Caco-2 (cell line): ENCODE measurements at regions of chr2 and their contacts with region 1.

Region 1: GRCh38 chr2:156892467-156893281 is 364.8 kb upstream of the GALNT5 start:
- DNase-seq: peak in 1 of 2 experiments; percentile 55
- H3K4me3 ChIP-seq: peak overlapping the region; percentile 36
- H3K4me3 Mint-ChIP-seq: peak overlapping the region; percentile 66
- H3K27ac Mint-ChIP-seq: no peak overlapping the region
- H3K4me1 ChIP-seq: no peaks in the 10 kb centered on the region
- H3K4me1 Mint-ChIP-seq: peaks cover 10% of the 10 kb centered on the region
- H3K27me3 ChIP-seq: no peaks in the 10 kb centered on the region
- H3K27me3 Mint-ChIP-seq: peaks cover 2% of the 10 kb centered on the region
- CTCF ChIP-seq: peak; percentile 58 to 71

Region 2: DNA sequence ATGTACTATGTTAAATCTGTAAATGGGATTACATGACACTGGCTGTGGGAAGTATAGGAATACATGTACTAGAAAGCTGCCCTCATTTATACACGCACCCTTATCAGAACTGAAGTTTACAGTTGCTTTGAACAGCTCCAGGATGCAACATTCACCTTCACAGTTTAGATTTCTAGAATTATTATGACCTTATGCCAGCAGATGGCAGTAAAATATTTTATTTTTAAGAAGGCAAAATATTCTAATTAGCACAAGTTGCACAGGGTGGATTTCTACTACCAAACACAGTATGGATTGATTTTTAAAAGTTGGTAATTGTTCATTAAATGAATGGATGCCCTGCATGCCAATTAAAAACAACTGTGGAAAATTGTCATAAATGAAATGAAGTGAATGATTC is 1523.7 kb before region 1 on chr2:
- CTCF ChIA-PET with region 1: no interaction called
- POLR2A ChIA-PET with region 1: no interaction called
- intact Hi-C with region 1: loop called (anchors 1 kb)
- DNase-seq: no peak
- H3K4me3 ChIP-seq: no peak overlapping the region
- H3K4me3 Mint-ChIP-seq: no peak overlapping the region
- H3K27ac Mint-ChIP-seq: no peak overlapping the region
- H3K4me1 ChIP-seq: no peaks in the 10 kb centered on the region
- H3K4me1 Mint-ChIP-seq: no peaks in the 10 kb centered on the region
- H3K27me3 ChIP-seq: no peaks in the 10 kb centered on the region
- H3K27me3 Mint-ChIP-seq: peaks cover 3% of the 10 kb centered on the region
- CTCF ChIP-seq: no peak

Region 3: DNA sequence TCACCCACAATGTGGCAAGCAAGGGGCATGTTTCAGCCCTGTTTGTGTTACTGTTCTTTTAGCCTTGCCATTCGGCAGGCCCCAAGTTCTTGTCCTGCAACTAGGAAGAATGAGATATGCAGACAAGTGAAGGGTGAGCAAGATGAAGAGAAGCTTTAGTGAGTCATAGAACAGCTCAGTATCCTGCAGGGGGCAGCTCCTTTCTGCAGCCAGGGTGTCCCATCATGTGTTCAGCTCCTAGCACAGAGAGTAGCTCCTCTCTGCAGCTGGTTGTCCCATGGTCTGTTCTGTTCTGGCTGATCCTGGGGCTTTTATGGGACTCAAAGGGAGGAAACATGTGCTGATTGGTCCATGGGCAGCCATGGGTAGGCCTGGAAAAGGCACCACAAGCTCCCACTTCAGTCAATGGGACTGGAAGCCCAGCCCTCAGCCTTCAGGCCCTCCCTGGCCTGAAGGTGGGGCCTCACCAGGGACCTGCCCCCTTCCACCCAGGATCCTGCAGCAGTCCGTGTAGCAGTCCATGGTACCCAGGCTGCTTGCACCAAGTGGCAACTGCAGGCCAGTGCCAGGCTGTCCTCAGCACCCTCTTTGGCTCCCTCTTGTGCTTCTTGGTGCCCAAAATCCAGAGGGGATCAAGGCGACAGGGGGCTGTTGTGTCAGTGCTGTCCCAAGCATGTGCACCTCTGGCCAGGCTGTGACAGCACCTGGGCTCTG is 886.5 kb before region 1 on chr2:
- CTCF ChIA-PET with region 1: no interaction called
- POLR2A ChIA-PET with region 1: no interaction called
- intact Hi-C with region 1: loop called (anchors 10 kb)
- DNase-seq: peak; percentile 35 to 48
- H3K4me3 ChIP-seq: no peak overlapping the region
- H3K4me3 Mint-ChIP-seq: no peak overlapping the region
- H3K27ac Mint-ChIP-seq: no peak overlapping the region
- H3K4me1 ChIP-seq: no peaks in the 10 kb centered on the region
- H3K4me1 Mint-ChIP-seq: no peaks in the 10 kb centered on the region
- H3K27me3 ChIP-seq: no peaks in the 10 kb centered on the region
- H3K27me3 Mint-ChIP-seq: no peaks in the 10 kb centered on the region
- CTCF ChIP-seq: peak in 1 of 2 experiments; percentile 24

Region 4: GRCh38 chr2:156332534-156333273 is 560.0 kb before region 1 on chr2 and contains the start of gene NR4A2:
- CTCF ChIA-PET with region 1: no interaction called
- POLR2A ChIA-PET with region 1: no interaction called
- intact Hi-C with region 1: loop called (anchors 1 kb)
- DNase-seq: peak; percentile 84
- H3K4me3 ChIP-seq: peak within 1 kb of the TSS; percentile 61
- H3K4me3 Mint-ChIP-seq: peak within 1 kb of the TSS; percentile 94
- H3K27ac Mint-ChIP-seq: peak within 1 kb of the TSS; percentile 97
- H3K4me1 ChIP-seq: no peaks in the 10 kb centered on the region
- H3K4me1 Mint-ChIP-seq: peaks cover 8% of the 10 kb centered on the region
- H3K27me3 ChIP-seq: no peaks in the 10 kb centered on the region
- H3K27me3 Mint-ChIP-seq: peaks cover 3% of the 10 kb centered on the region
- CTCF ChIP-seq: no peak
- total RNA-seq, gene NR4A2: 0.91 and 0.97 TPM in 2 replicates

Region 5: GRCh38 chr2:156589381-156590079 is 303.1 kb before region 1 on chr2:
- CTCF ChIA-PET with region 1: no interaction called
- POLR2A ChIA-PET with region 1: no interaction called
- intact Hi-C with region 1: loop called (anchors 2 kb)
- DNase-seq: peak in 1 of 2 experiments; percentile 33
- H3K4me3 ChIP-seq: no peak overlapping the region
- H3K4me3 Mint-ChIP-seq: no peak overlapping the region
- H3K27ac Mint-ChIP-seq: no peak overlapping the region
- H3K4me1 ChIP-seq: peaks cover 13% of the 10 kb centered on the region; the same call in 1 of the 2 replicates
- H3K4me1 Mint-ChIP-seq: peaks cover 13% of the 10 kb centered on the region
- H3K27me3 ChIP-seq: no peaks in the 10 kb centered on the region
- H3K27me3 Mint-ChIP-seq: no peaks in the 10 kb centered on the region
- CTCF ChIP-seq: peak; percentile 49 to 51

Region 6: GRCh38 chr2:156935632-156936031 is 43.0 kb after region 1 on chr2:
- CTCF ChIA-PET with region 1: no interaction called
- POLR2A ChIA-PET with region 1: no interaction called
- intact Hi-C with region 1: no loop called
- DNase-seq: no peak
- H3K4me3 ChIP-seq: no peak overlapping the region
- H3K4me3 Mint-ChIP-seq: no peak overlapping the region
- H3K27ac Mint-ChIP-seq: no peak overlapping the region
- H3K4me1 ChIP-seq: no peaks in the 10 kb centered on the region
- H3K4me1 Mint-ChIP-seq: peaks cover 6% of the 10 kb centered on the region
- H3K27me3 ChIP-seq: no peaks in the 10 kb centered on the region
- H3K27me3 Mint-ChIP-seq: peaks cover 5% of the 10 kb centered on the region
- CTCF ChIP-seq: no peak

Region 7: DNA sequence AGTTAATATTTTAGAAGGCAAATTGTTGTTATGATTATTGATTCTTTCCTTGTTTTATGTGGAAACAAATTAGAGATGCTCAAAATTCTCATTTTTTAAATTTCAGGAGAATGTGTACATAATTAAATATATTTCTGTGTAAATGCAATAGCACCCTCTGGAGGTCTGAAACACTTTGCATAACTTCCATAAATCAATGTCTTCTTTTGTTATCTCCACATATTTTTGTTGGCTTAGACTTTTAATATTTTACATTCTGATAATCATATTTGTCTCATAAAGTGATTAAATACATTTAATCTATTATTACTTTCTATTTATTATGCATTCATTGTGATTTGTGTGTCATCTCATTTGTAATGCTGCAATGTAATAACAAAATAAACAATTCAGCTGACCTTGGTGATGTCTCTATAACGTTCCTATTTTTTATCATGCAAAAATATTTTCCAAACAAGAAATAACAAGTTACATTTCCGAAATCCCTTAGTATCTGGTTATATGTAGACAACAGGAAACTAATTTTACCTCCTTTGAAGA is 163.1 kb after region 1 on chr2:
- CTCF ChIA-PET with region 1: no interaction called
- POLR2A ChIA-PET with region 1: no interaction called
- intact Hi-C with region 1: loop called (anchors 1 kb)
- DNase-seq: peak in 1 of 2 experiments; percentile 13
- H3K4me3 ChIP-seq: no peak overlapping the region
- H3K4me3 Mint-ChIP-seq: no peak overlapping the region
- H3K27ac Mint-ChIP-seq: no peak overlapping the region
- H3K4me1 ChIP-seq: peaks cover 8% of the 10 kb centered on the region
- H3K4me1 Mint-ChIP-seq: peaks cover 7% of the 10 kb centered on the region
- H3K27me3 ChIP-seq: no peaks in the 10 kb centered on the region
- H3K27me3 Mint-ChIP-seq: no peaks in the 10 kb centered on the region
- CTCF ChIP-seq: peak; percentile 40 to 47